Activated T-helper 2 cell treated with anti-CD3 and anti-CD28 coated beads, Interferon-gamma antibody, Interleukin-2, Interleukin-4, amounts not matched to agents 10 μg/mL and 5 μg/mL and 100 μg/mL, durations not matched to agents 14 hours and 24 hours and 36 hours (primary cell): ENCODE measurements at regions of chr13 and their contacts with region 1.

Region 1: GRCh38 chr13:77026818-77027585 is at the start of gene FBXL3:
- DNase-seq: peak; percentile 76
- H3K4me3 Mint-ChIP-seq: peak within 1 kb of the TSS; percentile 98
- H3K27ac Mint-ChIP-seq: peak within 1 kb of the TSS; percentile 95
- H3K4me1 Mint-ChIP-seq: peaks cover 51% of the 10 kb centered on the region
- H3K27me3 Mint-ChIP-seq: no peaks in the 10 kb centered on the region
- total RNA-seq, gene FBXL3: 38.2 and 44.4 TPM in 2 replicates

Region 2: GRCh38 chr13:75312884-75313520 is 1714.0 kb before region 1 on chr13:
- intact Hi-C with region 1: loop called (anchors 10 kb)
- DNase-seq: peak; percentile 46
- H3K4me3 Mint-ChIP-seq: no peak overlapping the region
- H3K27ac Mint-ChIP-seq: peak overlapping the region; percentile 82
- H3K4me1 Mint-ChIP-seq: peaks cover 61% of the 10 kb centered on the region
- H3K27me3 Mint-ChIP-seq: no peaks in the 10 kb centered on the region

Region 3: DNA sequence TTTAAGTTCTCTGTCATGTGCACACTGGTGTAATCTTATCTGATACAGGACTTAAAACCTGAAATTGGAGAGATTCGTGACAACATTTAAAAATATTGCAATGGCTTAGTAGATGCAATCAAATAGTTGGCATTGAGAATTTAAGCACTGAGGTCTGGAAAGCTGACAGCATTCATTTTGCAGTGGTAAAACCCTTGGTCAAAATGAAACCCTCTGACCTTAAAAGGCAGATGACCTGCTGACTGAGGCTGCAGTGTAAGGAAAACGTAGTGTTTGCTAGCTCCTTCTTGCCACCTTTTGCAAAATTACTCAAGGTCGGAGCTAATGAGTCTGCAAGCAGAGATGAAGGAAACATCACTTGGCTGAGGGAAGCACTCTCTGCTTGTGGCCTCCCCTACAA is 291.4 kb before region 1 on chr13:
- intact Hi-C with region 1: no loop called
- DNase-seq: no peak
- H3K4me3 Mint-ChIP-seq: no peak overlapping the region
- H3K27ac Mint-ChIP-seq: no peak overlapping the region
- H3K4me1 Mint-ChIP-seq: no peaks in the 10 kb centered on the region
- H3K27me3 Mint-ChIP-seq: no peaks in the 10 kb centered on the region

Region 4: DNA sequence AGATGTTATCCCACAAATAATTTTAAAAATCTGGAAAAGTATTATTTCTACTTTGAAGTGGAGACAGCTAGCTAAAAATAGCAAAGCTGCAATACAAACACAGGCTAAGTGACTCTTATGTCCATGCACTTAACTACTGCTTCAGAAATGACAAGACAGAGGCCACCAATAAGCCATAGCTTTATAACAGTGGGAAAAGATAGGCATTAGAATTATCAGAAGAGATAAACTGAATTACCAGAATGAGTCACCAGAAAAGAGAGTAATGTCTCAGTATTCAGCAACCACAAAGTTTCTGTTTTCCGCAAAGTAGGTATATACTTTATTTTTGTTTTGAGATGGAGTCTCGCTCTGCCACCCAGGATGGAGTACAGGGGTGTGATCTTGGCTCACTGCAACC is 18.0 kb before region 1 on chr13:
- intact Hi-C with region 1: loop called (anchors 2 kb)
- DNase-seq: no peak
- H3K4me3 Mint-ChIP-seq: no peak overlapping the region
- H3K27ac Mint-ChIP-seq: peak overlapping the region; percentile 62
- H3K4me1 Mint-ChIP-seq: peaks cover 22% of the 10 kb centered on the region
- H3K27me3 Mint-ChIP-seq: no peaks in the 10 kb centered on the region

Region 5: DNA sequence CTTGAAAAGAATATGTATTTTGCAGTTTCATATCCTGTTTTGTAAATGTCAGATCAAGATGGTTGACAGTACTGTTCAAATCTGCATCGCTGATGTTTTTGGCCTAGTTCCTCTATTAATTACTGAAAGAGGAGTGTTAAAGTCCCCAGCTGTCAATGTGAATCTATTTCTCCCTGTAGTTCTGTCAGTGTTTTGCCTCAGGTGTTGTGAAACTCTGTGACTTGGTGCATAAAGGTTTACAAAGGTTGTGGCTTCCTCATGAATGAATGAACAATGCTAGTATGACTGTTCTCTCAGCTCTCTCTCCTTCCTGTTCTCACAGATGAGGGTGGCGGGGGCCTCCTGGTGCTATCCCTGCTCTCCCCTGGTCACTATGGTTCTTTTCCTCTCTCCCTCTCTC is 157.5 kb after region 1 on chr13:
- intact Hi-C with region 1: loop called (anchors 2 kb)
- DNase-seq: no peak
- H3K4me3 Mint-ChIP-seq: no peak overlapping the region
- H3K27ac Mint-ChIP-seq: peak overlapping the region; percentile 43
- H3K4me1 Mint-ChIP-seq: peaks cover 17% of the 10 kb centered on the region
- H3K27me3 Mint-ChIP-seq: no peaks in the 10 kb centered on the region

Region 6: GRCh38 chr13:77480066-77480465 is 453.1 kb after region 1 on chr13:
- intact Hi-C with region 1: loop called (anchors 1 kb)
- DNase-seq: no peak
- H3K4me3 Mint-ChIP-seq: no peak overlapping the region
- H3K27ac Mint-ChIP-seq: no peak overlapping the region
- H3K4me1 Mint-ChIP-seq: peaks cover 11% of the 10 kb centered on the region
- H3K27me3 Mint-ChIP-seq: peaks cover 15% of the 10 kb centered on the region

Region 7: DNA sequence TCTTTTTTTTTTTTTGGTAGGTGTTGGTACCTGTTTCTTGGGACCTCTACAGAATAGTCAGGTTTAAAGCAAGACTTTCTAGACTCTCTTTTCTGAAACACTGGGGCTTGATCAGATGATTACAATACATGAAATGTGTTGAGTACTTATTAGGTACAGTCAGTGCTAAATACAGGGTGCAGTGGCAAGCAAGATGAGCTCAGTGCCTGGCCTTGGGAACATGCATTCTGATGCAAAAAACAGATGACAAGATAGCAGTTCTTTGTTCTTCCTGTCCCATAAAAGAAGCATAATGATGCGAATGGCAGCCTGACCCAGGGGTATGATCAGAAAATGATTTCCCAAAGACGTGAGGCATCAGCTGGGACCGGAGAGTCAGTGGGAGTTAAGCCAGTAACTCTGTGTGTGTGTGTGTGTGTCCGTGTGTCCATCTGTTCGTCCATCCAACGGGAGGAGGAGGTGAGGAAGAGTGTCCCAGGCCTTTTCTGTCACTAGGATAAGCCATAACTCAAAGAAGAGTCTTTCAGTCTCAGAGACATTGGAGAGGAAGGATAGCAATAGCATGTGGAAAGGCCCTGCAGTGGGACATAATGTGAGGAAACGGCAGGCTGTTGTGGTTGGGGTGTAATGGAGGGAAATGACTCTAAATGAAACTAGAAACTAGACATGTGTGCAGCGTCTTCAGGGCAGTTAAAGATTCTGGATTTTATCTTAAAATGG is 702.7 kb after region 1 on chr13:
- intact Hi-C with region 1: loop called (anchors 10 kb)
- DNase-seq: peak; percentile 51
- H3K4me3 Mint-ChIP-seq: peak overlapping the region; percentile 57
- H3K27ac Mint-ChIP-seq: peak overlapping the region; percentile 83
- H3K4me1 Mint-ChIP-seq: peaks cover 40% of the 10 kb centered on the region
- H3K27me3 Mint-ChIP-seq: no peaks in the 10 kb centered on the region